ENCODE measurements at regions of chr6 and their contacts with region 1.

Region 1: DNA sequence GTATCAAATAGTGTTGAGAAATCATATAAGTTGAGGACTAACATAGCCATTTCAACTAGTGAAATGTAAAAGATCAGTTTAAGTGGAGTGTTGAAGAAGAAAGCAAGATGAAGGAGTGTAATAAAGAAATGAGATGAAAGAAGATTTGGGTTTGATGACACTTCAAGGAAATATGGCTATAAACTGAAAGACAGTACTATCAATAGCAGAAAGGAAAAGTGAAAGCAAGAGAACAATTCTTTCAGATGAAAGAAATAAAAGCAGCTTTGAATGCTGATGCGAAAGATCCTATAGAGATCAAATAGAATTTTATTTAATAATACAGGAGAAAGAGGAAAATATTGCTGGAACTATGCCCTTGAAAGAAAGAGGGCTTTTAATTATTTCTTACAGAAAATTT is 92.8 kb upstream of the PRSS16 start:
- DNase-seq: no peak
- H3K4me3 ChIP-seq: no peak overlapping the region
- H3K27ac ChIP-seq: no peak overlapping the region
- H3K4me1 ChIP-seq: peaks cover 0 to 11% (median 9%) of the 10 kb centered on the region in 4 experiments
- H3K27me3 ChIP-seq: no peaks in the 10 kb centered on the region

Region 2: DNA sequence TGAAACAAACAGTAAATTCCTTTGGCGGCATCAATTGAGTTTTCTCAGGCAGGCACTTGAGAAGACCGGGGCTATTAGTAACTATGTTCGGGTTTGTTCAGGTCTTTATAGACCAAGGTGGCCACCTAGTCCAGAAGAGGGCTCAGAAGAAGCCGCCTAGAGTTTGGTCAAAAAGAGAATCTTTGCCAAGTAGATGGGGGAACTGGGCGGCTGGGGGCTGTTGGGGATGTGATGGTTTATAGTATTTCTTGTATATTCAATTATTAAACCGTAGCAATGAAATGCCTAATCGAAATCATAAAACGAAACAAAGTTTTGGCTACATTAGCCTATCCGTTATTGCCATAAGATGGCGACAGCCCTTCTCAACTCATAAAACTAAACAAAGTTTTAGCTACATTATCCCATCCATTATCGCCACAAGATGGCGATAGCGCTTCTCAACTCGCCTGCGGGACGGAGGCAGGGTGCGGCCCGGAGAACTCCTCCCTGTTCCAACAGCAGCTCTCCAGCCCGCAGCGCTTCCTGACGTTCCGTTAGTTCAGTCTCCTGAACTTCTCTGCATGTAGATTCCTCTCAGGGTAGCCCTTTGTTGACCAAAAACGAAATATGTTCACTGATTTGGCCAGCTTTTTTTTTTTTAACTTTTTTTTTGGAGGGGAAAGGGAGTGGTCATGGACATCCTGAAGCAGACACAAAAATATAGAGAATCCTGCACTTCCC is 27.7 kb before region 1 on chr6:
- CTCF ChIA-PET with region 1: interaction called, 15 read pairs
- POLR2A ChIA-PET with region 1: interaction called, 3 read pairs
- DNase-seq: peak; percentile 90 to 91 (median 91)
- H3K4me3 ChIP-seq: peak overlapping the region in 6 of 7 experiments; percentile 60 to 78 (median 67)
- H3K27ac ChIP-seq: peak overlapping the region; percentile 2 to 90
- H3K4me1 ChIP-seq: peaks cover 10 to 36% (median 24%) of the 10 kb centered on the region in 4 experiments
- H3K27me3 ChIP-seq: no peaks in the 10 kb centered on the region

Region 3: DNA sequence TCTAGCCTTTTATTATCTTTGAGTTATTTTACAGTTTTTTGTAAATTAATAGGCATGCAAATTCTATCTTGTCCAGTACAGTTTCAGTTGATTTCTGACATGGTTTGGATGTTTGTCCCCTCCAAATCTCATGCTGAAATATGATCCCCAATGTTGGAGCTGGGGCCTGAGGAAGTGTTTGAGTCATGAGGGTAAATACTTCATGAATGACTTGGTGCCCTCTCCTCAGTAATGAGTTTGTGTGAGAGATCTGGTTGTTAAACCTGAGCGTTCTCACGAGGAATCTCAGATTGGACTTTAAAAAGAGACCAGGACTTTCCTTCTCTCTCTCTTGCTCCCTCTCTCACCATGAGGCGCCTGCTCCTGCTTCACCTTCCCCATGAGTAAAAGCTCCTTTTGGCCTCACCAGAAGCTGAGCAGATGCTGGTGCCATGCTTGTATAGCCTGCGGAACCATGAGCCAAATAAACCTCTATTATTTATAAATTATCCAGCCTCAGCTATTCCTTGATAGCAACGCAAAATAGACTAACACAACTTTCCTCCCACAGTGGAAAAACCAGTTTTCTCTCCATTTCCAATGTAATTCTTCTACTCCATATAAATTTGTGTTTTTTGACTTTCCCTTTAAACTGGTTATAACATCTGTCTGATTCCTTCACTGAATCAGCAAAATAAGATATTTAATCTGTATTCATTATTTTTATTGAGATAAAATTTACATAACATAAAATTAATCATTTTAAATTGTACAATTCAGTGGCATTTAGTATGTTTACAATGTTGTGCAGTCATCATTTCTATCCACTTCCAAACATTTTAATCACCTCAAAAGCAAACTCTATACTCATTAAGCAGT is 14.1 kb after region 1 on chr6:
- CTCF ChIA-PET with region 1: no interaction called
- POLR2A ChIA-PET with region 1: no interaction called
- DNase-seq: no peak
- H3K4me3 ChIP-seq: no peak overlapping the region
- H3K27ac ChIP-seq: no peak overlapping the region
- H3K4me1 ChIP-seq: no peaks in the 10 kb centered on the region
- H3K27me3 ChIP-seq: no peaks in the 10 kb centered on the region

Measured in common myeloid progenitor, CD34-positive (primary cell).